Activated naive CD4-positive, alpha-beta T cell treated with anti-CD3 and anti-CD28 coated beads for 36 hours (primary cell): ENCODE measurements at regions of chrX and their contacts with region 1.

Region 1: GRCh38 chrX:120269373-120270035 is 18.9 kb downstream of the ZBTB33 start:
- DNase-seq: peak; percentile 45
- H3K4me3 Mint-ChIP-seq: no peak overlapping the region
- H3K27ac Mint-ChIP-seq: peak overlapping the region; percentile 75
- H3K4me1 Mint-ChIP-seq: peaks cover 12% of the 10 kb centered on the region
- H3K27me3 Mint-ChIP-seq: no peaks in the 10 kb centered on the region

Region 2: GRCh38 chrX:120302434-120302833 is 32.9 kb after region 1 on chrX:
- CTCF ChIA-PET with region 1: no interaction called
- intact Hi-C with region 1: loop called (anchors 5 kb)
- DNase-seq: peak; percentile 62
- H3K4me3 Mint-ChIP-seq: no peak overlapping the region
- H3K27ac Mint-ChIP-seq: no peak overlapping the region
- H3K4me1 Mint-ChIP-seq: peaks cover 13% of the 10 kb centered on the region
- H3K27me3 Mint-ChIP-seq: no peaks in the 10 kb centered on the region

Region 3: DNA sequence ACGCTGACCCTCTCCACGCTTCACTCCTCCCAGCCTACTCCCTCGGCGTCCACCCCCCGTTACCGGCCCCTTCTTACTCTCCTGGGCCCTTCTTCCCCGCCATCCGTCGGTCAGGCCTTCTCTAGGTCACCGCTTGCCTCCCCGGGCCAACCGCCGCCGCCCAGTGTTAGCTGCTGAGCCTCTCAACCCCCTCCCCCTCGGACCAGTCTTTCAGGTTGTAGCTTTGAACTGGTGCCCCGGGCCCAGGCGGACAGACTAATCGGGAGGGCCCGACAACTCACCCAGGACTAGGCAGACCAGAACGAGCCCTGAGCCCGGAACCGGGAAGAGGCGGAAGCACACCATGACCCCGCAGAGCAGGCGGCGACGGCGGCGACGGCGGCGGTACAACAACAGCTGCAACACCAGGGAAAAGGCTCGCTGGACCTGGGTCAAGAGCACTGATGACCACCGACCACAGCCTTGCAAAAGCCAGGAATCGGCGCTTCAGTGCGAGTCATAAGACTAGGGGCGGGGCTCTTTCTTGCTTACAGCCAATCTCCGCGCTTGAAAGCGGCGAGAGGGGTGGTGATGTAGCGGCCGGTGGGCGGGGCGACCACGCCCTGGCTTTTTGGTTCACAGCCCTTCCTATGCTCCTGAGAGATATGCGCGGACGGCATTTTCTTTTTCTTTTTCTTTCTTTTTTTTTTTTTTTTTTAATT is 199.5 kb after region 1 on chrX and contains the start of gene LAMP2:
- CTCF ChIA-PET with region 1: no interaction called
- intact Hi-C with region 1: no loop called
- DNase-seq: peak; percentile 87
- H3K4me3 Mint-ChIP-seq: peak within 1 kb of the TSS; percentile 86
- H3K27ac Mint-ChIP-seq: peak within 1 kb of the TSS; percentile 91
- H3K4me1 Mint-ChIP-seq: peaks cover 15% of the 10 kb centered on the region
- H3K27me3 Mint-ChIP-seq: no peaks in the 10 kb centered on the region
- total RNA-seq, gene LAMP2: 37.9 to 38.0 TPM